ENCODE measurements at regions of chr18 and their contacts with region 1.

Region 1: DNA sequence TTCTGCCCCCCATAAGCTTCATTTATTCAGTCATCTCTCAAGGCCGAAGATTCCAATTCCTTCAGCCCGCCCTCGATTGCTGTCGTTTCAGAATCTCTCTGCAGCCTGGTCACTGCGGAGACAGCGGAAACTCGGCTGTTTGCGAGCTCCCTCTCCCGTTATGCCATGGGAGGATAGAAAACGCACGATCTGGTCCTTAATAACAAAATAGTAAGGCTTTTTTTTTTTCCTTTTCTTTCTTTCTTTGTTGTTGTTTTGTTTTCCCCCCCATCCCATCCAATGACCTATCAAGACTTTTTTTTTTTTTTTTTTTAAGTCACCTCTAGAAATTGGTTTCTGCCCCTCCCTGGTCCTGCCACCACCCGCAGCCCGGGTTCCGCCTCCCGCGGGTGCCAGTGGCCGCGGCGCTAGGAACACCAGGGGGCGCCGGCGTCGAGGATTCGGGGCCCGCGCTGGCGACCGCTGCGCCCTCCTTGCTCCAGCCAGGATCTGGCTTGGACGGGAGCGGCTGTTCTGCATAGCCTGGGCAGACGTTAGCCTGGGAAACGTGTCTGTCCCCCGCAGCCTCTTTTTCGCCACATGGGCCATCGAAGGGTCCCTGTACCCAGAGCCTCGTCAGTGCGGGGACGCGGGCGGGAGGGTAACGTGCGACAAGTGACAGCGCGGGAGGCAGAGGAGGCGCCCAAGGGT is 10.1 kb downstream of the CPLX4 start:
- DNase-seq: peak; percentile 15 to 89
- H3K4me3 ChIP-seq: peak overlapping the region; percentile 14 to 54 (median 47); a peak in 7 of 8 replicates
- H3K27ac ChIP-seq: no peak overlapping the region
- H3K4me1 ChIP-seq: no peaks in the 10 kb centered on the region; a peak in 1 of 7 replicates
- H3K27me3 ChIP-seq: peaks cover 0 to 13% (median 6%) of the 10 kb centered on the region in 4 experiments; a peak in 6 of 7 replicates
- CTCF ChIP-seq: peak; percentile 58 to 92 (median 74)
- EP300 ChIP-seq: no peak
- POLR2A ChIP-seq: no peak
- RAD21 ChIP-seq: peak; percentile 75 to 82

Region 2: GRCh38 chr18:59318460-59319050 is 10.2 kb after region 1 on chr18 and contains the start of gene CPLX4:
- CTCF ChIA-PET with region 1: interaction called, 36 read pairs
- POLR2A ChIA-PET with region 1: interaction called, 3 read pairs
- DNase-seq: no peak
- H3K4me3 ChIP-seq: no peak within 1 kb of the TSS
- H3K27ac ChIP-seq: no peak within 1 kb of the TSS
- H3K4me1 ChIP-seq: no peaks in the 10 kb centered on the region
- H3K27me3 ChIP-seq: no peaks in the 10 kb centered on the region
- CTCF ChIP-seq: no peak
- EP300 ChIP-seq: no peak
- POLR2A ChIP-seq: no peak
- RAD21 ChIP-seq: no peak
- total RNA-seq, gene CPLX4: not detected in 2 replicates

Region 3: DNA sequence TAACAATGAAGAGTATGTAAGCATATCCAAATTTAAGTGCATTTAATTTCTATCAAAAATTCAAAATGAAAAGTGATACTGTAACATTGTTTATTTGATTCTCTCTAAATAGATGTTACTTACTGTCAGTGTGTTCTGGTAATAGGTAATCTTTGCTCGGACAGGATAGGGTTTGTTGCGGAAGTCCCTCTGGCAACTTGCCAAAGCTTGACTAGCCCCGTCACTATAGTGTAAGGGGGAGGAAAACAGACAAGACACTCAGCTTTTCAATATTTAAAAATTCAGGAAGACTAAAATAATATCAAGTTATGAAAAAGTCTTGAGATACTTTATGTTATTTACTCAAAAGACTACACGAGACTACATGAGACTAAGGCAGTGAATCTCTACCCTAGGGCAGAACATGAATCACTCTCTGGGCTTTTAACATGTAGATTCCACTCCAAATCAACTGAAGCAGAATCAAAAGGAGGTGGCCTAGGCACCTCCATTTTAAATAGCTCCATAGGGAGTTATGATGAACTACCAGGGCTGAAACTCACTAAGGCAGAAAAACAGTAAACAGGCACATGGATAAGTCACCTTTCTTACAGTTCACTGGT is 44.8 kb after region 1 on chr18:
- CTCF ChIA-PET with region 1: interaction called, 18 read pairs
- POLR2A ChIA-PET with region 1: no interaction called
- DNase-seq: no peak
- H3K4me3 ChIP-seq: no peak overlapping the region
- H3K27ac ChIP-seq: no peak overlapping the region
- H3K4me1 ChIP-seq: no peaks in the 10 kb centered on the region; a peak in 2 of 7 replicates
- H3K27me3 ChIP-seq: no peaks in the 10 kb centered on the region
- CTCF ChIP-seq: no peak
- EP300 ChIP-seq: no peak
- POLR2A ChIP-seq: no peak
- RAD21 ChIP-seq: no peak

Measured in H1 (cell line).